ENCODE measurements at regions of chr10 and their contacts with region 1.

Region 1: DNA sequence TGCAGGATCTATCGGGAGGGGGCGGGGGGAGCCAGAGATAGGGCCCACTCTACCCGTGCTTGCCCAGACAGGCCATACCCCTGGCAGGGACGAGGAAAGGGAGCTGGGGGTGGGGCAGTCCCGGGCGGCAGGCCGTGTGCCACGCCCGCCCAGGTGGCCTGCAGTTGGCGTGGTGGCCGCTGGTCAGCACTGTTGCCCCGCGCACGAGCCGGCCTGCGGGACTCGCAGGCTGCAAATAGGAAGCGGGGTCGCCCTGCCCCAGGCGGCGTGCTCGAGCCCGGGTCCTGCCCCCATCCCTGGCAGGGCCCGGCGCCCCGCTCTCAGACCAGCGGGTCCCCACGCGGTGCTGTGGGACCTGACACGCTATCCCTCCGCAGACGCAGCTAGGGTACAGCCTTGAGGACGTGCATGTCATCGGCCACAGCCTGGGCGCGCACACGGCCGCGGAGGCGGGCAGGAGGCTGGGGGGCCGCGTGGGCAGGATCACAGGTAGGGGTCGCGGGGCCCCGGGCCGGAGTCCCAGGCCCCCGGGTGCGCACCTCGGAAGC is 6.7 kb downstream of the PNLIPRP2 start:
- DNase-seq: peak; percentile 59

Region 2: GRCh38 chr10:117174439-117175214 is 547.2 kb after region 1 on chr10:
- in situ Hi-C with region 1: loop called (anchors 25 kb)
- DNase-seq: peak; percentile 82